ENCODE measurements at regions of chr7 and their contacts with region 1.

Region 1: DNA sequence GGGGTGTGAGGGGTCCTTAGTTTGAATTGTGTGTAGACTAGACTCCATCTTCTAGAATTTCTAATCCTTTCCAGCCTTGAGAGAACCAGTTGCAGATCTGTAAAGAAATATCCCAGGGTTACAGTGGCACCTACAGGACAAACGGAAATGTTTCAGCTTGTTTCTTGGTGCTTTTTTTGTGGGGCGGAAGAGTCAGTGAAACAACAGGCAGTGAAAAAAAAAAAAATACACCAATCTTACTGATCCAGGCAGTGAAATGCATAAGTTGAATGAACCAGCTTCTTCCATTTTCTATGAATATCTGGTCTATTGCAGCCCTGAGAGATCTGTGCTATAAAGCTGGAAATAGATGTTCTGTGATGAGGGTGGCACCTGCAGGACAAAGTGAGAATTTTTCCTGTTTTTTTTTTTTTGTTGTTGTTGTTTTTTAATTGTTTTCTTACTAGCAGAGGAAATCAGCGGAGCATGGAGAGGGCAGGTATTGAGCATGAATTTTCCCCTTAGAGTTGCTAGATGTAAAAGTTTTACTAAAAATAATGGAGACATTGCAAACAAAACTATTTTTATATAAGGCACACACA is 81.9 kb upstream of the DYNC1I1 start:
- DNase-seq: no peak
- ATAC-seq: peak; percentile 56

Region 2: GRCh38 chr7:95511716-95512260 is 178.7 kb before region 1 on chr7:
- intact Hi-C with region 1: loop called (anchors 1 kb)
- DNase-seq: no peak
- ATAC-seq: peak; percentile 85

Measured in Right ventricle myocardium inferior (tissue), 1 donor.